A673 (cell line): ENCODE measurements at regions of chr3 and their contacts with region 1.

Region 1: GRCh38 chr3:49906004-49906743 is 2.5 kb upstream of the MST1R start:
- DNase-seq: peak; percentile 60
- H3K4me3 ChIP-seq: no peak overlapping the region
- H3K27ac ChIP-seq: no peak overlapping the region
- H3K4me1 ChIP-seq: no peaks in the 10 kb centered on the region
- H3K27me3 ChIP-seq: no peaks in the 10 kb centered on the region
- CTCF ChIP-seq: peak; percentile 66

Region 2: GRCh38 chr3:49313896-49314688 is 592.1 kb before region 1 on chr3:
- CTCF ChIA-PET with region 1: no interaction called
- POLR2A ChIA-PET with region 1: no interaction called
- intact Hi-C with region 1: no loop called
- DNase-seq: no peak
- H3K4me3 ChIP-seq: no peak overlapping the region
- H3K27ac ChIP-seq: no peak overlapping the region
- H3K4me1 ChIP-seq: no peaks in the 10 kb centered on the region
- H3K27me3 ChIP-seq: no peaks in the 10 kb centered on the region
- CTCF ChIP-seq: no peak

Region 3: DNA sequence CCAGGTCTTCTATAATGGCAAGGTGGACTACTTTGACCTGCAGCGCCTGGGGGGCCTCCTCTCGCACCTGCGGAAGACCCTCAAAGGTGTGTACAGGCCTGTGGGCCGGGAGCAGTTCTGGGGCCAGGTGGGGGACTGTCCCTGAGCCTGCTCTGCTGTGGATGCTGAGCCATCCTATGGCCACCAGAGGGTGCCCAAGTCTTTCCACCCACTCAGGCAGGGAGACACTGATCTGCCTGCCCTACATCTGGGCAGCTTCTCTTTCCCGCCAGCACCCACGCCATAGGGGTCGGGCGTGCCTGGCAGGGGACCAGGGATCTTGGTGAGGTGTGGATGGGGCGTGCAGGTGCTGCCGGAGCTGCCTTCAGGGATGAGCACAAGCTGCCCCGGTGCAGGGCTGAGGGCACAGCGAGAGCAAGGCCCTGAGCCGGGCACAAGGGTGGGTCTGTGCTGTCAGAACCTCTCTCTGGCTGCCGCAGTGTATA is 202.7 kb before region 1 on chr3:
- CTCF ChIA-PET with region 1: no interaction called
- POLR2A ChIA-PET with region 1: no interaction called
- intact Hi-C with region 1: loop called (anchors 5 kb)
- DNase-seq: peak; percentile 60
- H3K4me3 ChIP-seq: no peak overlapping the region
- H3K27ac ChIP-seq: no peak overlapping the region
- H3K4me1 ChIP-seq: no peaks in the 10 kb centered on the region
- H3K27me3 ChIP-seq: no peaks in the 10 kb centered on the region
- CTCF ChIP-seq: peak; percentile 63

Region 4: GRCh38 chr3:49723628-49724551 is 182.3 kb before region 1 on chr3 and contains the start of gene GMPPB:
- CTCF ChIA-PET with region 1: interaction called, 3 read pairs
- POLR2A ChIA-PET with region 1: no interaction called
- intact Hi-C with region 1: loop called (anchors 5 kb)
- DNase-seq: peak; percentile 88
- H3K4me3 ChIP-seq: peak within 1 kb of the TSS; percentile 83
- H3K27ac ChIP-seq: peak within 1 kb of the TSS; percentile 85
- H3K4me1 ChIP-seq: no peaks in the 10 kb centered on the region
- H3K27me3 ChIP-seq: no peaks in the 10 kb centered on the region
- CTCF ChIP-seq: no peak
- total RNA-seq, gene GMPPB: 15.2 and 16.6 TPM in 2 replicates

Region 5: DNA sequence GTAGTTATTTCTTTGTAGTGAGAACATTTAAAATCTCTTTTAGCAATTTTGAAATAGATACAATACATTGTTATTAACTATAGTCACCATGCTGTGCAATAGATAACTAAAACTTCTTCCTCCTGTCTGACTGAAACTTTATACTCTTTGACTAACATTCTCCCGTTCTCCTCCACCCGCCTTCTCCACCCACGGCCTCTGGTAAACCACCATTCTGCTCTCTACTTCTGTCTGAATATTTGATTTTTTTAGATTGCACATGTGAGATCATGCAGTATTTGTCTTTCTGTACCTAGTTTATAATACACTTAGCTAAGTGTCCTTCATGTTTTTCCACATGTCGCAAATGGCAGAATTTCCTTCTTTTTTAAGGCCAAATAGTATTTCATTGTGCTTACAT is 109.7 kb after region 1 on chr3:
- CTCF ChIA-PET with region 1: no interaction called
- POLR2A ChIA-PET with region 1: no interaction called
- intact Hi-C with region 1: no loop called
- DNase-seq: no peak
- H3K4me3 ChIP-seq: no peak overlapping the region
- H3K27ac ChIP-seq: no peak overlapping the region
- H3K4me1 ChIP-seq: no peaks in the 10 kb centered on the region
- H3K27me3 ChIP-seq: no peaks in the 10 kb centered on the region
- CTCF ChIP-seq: no peak

Region 6: DNA sequence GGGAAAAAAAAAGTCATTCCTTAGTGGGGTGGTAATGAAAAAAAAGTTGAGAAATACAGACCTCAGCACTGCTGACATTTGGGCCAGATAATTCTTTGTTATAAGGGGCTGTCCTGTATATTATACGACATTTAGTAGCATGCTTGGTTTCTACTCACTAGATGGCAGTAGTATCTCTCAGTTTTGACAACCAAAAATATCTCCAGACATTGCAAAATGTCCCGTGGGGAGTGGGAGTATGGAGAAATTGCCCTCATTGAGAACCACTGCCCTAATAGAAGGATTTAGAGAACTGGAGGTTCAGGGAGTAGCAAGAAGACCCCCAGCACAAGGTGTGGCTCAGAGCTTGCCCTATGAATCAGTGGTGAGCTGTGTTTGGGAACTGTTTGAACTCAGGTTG is 1736.3 kb after region 1 on chr3:
- CTCF ChIA-PET with region 1: no interaction called
- POLR2A ChIA-PET with region 1: no interaction called
- intact Hi-C with region 1: no loop called
- DNase-seq: peak; percentile 3
- H3K4me3 ChIP-seq: no peak overlapping the region
- H3K27ac ChIP-seq: no peak overlapping the region
- H3K4me1 ChIP-seq: no peaks in the 10 kb centered on the region
- H3K27me3 ChIP-seq: no peaks in the 10 kb centered on the region
- CTCF ChIP-seq: peak; percentile 29; the same call in 1 of the 2 replicates